Activated B cell treated with CpG ODN at 0.5 μM for 24 hours (primary cell): ENCODE measurements at regions of chr20 and their contacts with region 1.

Region 1: DNA sequence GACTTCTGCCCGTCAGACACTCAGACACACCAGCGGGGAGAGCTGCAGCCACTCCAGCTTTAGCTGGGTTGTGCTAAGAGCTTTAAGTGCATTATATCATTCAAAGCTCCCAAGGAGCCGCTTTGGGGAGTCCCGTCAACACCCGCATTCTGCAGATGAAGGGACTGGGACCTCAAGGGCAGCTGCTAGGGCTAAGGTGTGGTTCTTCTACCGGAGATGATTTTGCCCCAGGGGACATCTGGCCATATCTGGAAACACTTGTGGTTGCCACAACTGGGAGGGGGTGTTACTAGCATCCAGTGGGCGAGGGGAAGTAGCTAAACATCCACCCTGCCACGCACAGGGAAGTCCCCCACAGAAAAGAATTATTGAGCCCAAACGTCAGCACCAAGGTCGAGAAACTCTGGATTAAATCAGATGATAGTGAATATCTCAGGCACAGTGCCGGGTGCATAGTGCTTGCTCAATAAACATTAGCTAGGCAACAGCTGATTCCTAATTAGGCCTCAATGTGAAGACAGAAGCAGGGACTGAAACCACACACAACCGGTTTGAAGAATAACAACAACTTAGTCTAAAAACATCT is 29.6 kb downstream of the PMEPA1 start:
- DNase-seq: peak; percentile 64
- ATAC-seq: peak; percentile 72
- H3K4me3 Mint-ChIP-seq: peak overlapping the region; percentile 80
- H3K27ac Mint-ChIP-seq: peak overlapping the region; percentile 94
- H3K4me1 Mint-ChIP-seq: peaks cover 100% of the 10 kb centered on the region
- H3K27me3 Mint-ChIP-seq: no peaks in the 10 kb centered on the region
- CTCF ChIP-seq: no peak

Region 2: GRCh38 chr20:57398231-57398821 is 281.9 kb before region 1 on chr20:
- CTCF ChIA-PET with region 1: no interaction called
- POLR2A ChIA-PET with region 1: interaction called, 15 read pairs
- intact Hi-C with region 1: loop called (anchors 1 kb)
- DNase-seq: peak; percentile 78
- ATAC-seq: peak; percentile 64
- H3K4me3 Mint-ChIP-seq: peak overlapping the region; percentile 78
- H3K27ac Mint-ChIP-seq: peak overlapping the region; percentile 97
- H3K4me1 Mint-ChIP-seq: peaks cover 100% of the 10 kb centered on the region
- H3K27me3 Mint-ChIP-seq: no peaks in the 10 kb centered on the region
- CTCF ChIP-seq: no peak

Region 3: DNA sequence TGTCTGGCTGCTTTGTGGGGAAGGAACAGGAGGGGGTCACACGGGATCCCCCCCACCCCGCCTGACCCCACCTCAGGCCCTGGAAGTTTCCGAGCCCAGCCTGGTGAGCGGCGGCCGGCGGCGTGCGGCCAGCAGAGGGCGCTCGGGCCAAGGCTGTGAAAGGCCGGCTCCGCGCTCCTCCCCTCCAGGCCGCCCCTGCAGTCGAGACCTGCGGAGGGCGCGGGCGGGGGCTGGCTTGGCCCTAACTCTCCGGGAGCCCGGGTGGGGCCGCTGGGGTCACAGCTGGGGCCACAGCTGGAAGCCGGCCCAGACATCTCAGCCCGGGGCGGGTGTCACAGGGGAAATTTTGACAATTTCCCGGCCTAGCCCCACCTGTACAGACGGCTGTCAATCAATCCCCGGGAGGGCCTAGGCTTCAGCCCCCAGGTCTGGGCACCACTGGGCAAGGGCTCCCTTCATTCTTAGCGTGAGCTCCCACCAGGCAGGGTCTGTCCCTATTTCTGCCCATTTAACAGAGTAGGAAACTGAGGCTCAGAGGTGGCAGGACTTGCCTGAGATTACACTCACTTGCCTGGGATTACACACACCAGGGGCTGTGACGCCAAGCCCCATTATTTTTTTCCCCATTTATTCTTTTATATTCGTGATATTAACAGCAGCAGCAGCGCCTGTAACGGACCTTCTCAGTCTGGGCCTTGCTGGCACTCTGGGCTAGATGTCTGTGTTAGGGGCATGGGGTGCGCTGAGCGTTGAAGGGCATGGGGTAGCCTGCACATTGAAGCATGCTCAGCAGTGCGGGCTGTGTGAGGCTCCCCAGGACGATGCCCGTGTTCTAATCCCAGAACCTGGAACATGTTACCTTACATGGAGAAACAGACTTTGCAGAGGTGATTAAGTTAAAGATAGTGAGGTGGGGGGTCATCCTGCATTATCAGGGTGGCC is 83.0 kb before region 1 on chr20:
- CTCF ChIA-PET with region 1: interaction called, 18 read pairs
- POLR2A ChIA-PET with region 1: interaction called, 6 read pairs
- intact Hi-C with region 1: loop called (anchors 1 kb)
- DNase-seq: peak; percentile 82
- ATAC-seq: peak; percentile 85
- H3K4me3 Mint-ChIP-seq: peak overlapping the region; percentile 42
- H3K27ac Mint-ChIP-seq: no peak overlapping the region
- H3K4me1 Mint-ChIP-seq: peaks cover 25% of the 10 kb centered on the region
- H3K27me3 Mint-ChIP-seq: peaks cover 18% of the 10 kb centered on the region
- CTCF ChIP-seq: peak; percentile 35

Region 4: DNA sequence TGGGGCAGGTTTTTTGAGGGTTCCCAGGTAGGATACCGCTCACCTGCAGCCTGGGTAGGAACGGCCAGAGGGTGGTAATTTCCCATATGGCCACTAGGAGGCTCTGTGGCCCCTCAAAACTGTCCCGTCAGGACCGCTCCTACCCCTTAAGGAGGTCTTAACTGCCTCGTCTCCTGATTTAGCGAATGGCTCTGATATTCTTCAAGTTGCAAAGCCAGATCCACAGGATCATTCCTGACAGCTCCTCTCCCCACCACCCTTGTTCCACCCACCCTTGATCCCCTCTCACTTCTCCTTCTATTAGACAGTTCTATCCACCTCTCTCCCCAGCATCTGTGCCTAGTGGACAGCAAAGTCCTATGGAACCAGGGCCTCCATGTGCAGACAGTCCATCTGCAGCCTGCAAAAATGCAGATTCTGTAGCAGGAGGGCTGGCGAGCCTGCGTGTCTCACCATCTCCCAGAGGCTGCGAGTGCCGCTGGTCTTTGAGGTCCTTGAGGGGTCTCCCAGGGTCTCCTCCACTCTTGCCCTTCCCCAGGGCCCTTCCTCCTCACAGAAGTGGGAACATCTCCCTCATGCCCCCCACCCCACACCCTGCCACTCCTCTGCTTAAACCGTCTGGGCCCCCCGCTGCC is 25.7 kb before region 1 on chr20:
- CTCF ChIA-PET with region 1: interaction called, 27 read pairs
- POLR2A ChIA-PET with region 1: interaction called, 6 read pairs
- intact Hi-C with region 1: loop called (anchors 1 kb)
- DNase-seq: peak; percentile 55
- ATAC-seq: peak; percentile 96
- H3K4me3 Mint-ChIP-seq: no peak overlapping the region
- H3K27ac Mint-ChIP-seq: peak overlapping the region; percentile 52
- H3K4me1 Mint-ChIP-seq: peaks cover 29% of the 10 kb centered on the region
- H3K27me3 Mint-ChIP-seq: no peaks in the 10 kb centered on the region
- CTCF ChIP-seq: peak; percentile 93

Region 5: GRCh38 chr20:57664509-57664875 is 15.7 kb before region 1 on chr20:
- CTCF ChIA-PET with region 1: no interaction called
- POLR2A ChIA-PET with region 1: no interaction called
- intact Hi-C with region 1: no loop called
- DNase-seq: no peak
- ATAC-seq: no peak
- H3K4me3 Mint-ChIP-seq: no peak overlapping the region
- H3K27ac Mint-ChIP-seq: no peak overlapping the region
- H3K4me1 Mint-ChIP-seq: peaks cover 25% of the 10 kb centered on the region
- H3K27me3 Mint-ChIP-seq: no peaks in the 10 kb centered on the region
- CTCF ChIP-seq: no peak

Region 6: DNA sequence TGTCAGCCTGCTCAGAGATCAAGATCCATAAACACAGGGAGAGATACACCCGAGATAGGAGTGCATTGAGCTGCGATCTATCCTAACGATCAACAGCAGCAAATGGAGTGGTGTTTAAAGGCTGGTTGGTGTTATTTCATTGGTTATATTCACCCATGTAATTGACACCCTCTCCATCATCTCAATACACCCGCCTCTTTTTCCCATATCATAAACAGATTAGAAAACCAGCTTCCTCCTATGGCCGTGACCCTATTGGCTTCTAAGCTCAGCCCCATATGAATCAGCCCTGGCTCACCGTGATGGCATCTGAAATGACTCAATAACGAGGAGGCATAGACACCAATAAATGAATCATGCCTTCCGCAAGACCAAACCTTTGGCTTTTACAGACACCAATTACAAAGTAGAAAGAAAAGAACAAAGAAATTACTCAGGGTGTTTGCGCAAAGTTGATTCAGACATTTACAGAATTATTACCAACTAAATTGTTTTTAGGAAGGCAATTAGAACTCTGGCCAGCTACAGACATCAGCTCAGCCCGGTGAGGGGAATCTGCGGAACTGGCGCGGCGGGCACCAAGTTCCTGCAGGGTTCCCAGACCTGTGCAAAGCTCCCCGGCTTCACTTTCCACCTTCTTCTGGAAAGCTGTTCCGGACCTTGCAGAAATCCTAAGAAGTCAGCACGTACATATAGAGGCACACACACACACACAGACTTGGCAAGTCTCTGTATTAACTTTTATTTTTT is 18.1 kb after region 1 on chr20:
- CTCF ChIA-PET with region 1: interaction called, 64 read pairs
- POLR2A ChIA-PET with region 1: interaction called, 189 read pairs
- intact Hi-C with region 1: loop called (anchors 1 kb)
- DNase-seq: no peak
- ATAC-seq: peak; percentile 35
- H3K4me3 Mint-ChIP-seq: peak overlapping the region; percentile 76
- H3K27ac Mint-ChIP-seq: peak overlapping the region; percentile 92
- H3K4me1 Mint-ChIP-seq: peaks cover 97% of the 10 kb centered on the region
- H3K27me3 Mint-ChIP-seq: no peaks in the 10 kb centered on the region
- CTCF ChIP-seq: no peak

Region 7: GRCh38 chr20:57718490-57719271 is 38.5 kb after region 1 on chr20:
- CTCF ChIA-PET with region 1: interaction called, 6 read pairs
- POLR2A ChIA-PET with region 1: interaction called, 5 read pairs
- intact Hi-C with region 1: loop called (anchors 1 kb)
- DNase-seq: peak; percentile 85
- ATAC-seq: peak; percentile 100
- H3K4me3 Mint-ChIP-seq: peak overlapping the region; percentile 68
- H3K27ac Mint-ChIP-seq: peak overlapping the region; percentile 56
- H3K4me1 Mint-ChIP-seq: peaks cover 9% of the 10 kb centered on the region
- H3K27me3 Mint-ChIP-seq: peaks cover 3% of the 10 kb centered on the region
- CTCF ChIP-seq: no peak

Region 8: GRCh38 chr20:58219301-58219700 is 539.1 kb after region 1 on chr20:
- CTCF ChIA-PET with region 1: no interaction called
- POLR2A ChIA-PET with region 1: no interaction called
- intact Hi-C with region 1: no loop called
- DNase-seq: no peak
- ATAC-seq: no peak
- H3K4me3 Mint-ChIP-seq: no peak overlapping the region
- H3K27ac Mint-ChIP-seq: no peak overlapping the region
- H3K4me1 Mint-ChIP-seq: no peaks in the 10 kb centered on the region
- H3K27me3 Mint-ChIP-seq: peaks cover 53% of the 10 kb centered on the region
- CTCF ChIP-seq: no peak